Posterior cingulate gyrus (tissue), 11 donors: ENCODE measurements at regions of chr2 and their contacts with region 1.

Region 1: DNA sequence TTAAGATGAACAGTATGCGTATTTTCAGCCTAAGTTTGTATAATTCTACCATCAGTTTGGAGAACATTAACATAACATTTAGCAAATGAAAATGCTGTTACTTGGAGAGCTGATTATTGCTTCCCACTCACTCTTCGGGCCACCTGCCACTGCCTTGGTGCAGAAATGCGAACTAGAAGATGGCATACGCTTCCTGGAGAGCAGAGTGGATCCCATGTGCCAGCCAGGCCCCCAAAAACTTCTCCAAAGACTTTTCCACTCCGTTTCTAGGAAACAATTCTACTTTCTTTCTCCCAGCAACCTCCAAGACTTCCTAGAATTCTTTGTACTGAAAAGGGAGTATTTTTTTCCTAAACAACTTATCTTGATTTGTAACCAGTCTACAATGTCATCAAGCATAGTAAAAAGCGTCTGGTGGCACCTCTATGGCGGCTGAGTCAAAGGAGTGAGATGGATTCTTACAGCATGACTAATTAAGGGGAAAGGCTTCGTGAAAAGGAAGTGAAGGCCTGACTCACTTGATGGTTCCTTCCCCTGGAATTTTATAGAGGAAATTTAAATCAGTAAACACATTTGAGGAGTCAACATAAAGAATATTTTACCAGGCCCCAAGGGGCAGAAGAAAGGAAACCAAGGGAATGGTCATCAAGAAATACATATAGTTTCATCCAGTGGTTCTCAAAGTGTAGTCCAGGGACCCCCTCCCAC is 36.6 kb downstream of the FEZ2 start:
- DNase-seq: peak in 3 of 10 donors; percentile 28 to 82 (median 29)

Region 2: GRCh38 chr2:36597532-36598377 is 36.4 kb after region 1 on chr2 and contains the start of gene FEZ2:
- intact Hi-C with region 1: loop called (anchors 5 kb)
- DNase-seq: peak; percentile 38 to 95 (median 66)